Heart left ventricle (tissue), 16 donors: ENCODE measurements at regions of chr4 and their contacts with region 1.

Region 1: GRCh38 chr4:8391972-8392371 is 48.6 kb downstream of the ACOX3 start:
- DNase-seq: peak; percentile 69 to 77 (median 75)
- ATAC-seq: peak in 3 of 4 donors; percentile 31 to 45 (median 42)
- H3K4me3 ChIP-seq: no peak overlapping the region
- H3K27ac ChIP-seq: peak overlapping the region in 7 of 12 donors; percentile 14 to 94 (median 75)
- H3K4me1 ChIP-seq: peaks cover 0 to 42% (median 30%) of the 10 kb centered on the region in 12 donors
- H3K27me3 ChIP-seq: no peaks in the 10 kb centered on the region
- CTCF ChIP-seq: peak in 1 of 12 donors; percentile 31
- POLR2A ChIP-seq: no peak

Region 2: GRCh38 chr4:8330821-8331574 is 61.0 kb before region 1 on chr4:
- intact Hi-C with region 1: loop called in 2 of 10 experiments (anchors 5 to 10 kb)
- DNase-seq: peak; percentile 47 to 88 (median 86)
- ATAC-seq: peak; percentile 94 to 97 (median 96)
- H3K4me3 ChIP-seq: no peak overlapping the region
- H3K27ac ChIP-seq: peak overlapping the region in 11 of 12 donors; percentile 1 to 85 (median 60)
- H3K4me1 ChIP-seq: peaks cover 2 to 21% (median 15%) of the 10 kb centered on the region in 12 donors
- H3K27me3 ChIP-seq: no peaks in the 10 kb centered on the region
- CTCF ChIP-seq: peak in 8 of 12 donors; percentile 17 to 38 (median 22)
- POLR2A ChIP-seq: no peak

Region 3: DNA sequence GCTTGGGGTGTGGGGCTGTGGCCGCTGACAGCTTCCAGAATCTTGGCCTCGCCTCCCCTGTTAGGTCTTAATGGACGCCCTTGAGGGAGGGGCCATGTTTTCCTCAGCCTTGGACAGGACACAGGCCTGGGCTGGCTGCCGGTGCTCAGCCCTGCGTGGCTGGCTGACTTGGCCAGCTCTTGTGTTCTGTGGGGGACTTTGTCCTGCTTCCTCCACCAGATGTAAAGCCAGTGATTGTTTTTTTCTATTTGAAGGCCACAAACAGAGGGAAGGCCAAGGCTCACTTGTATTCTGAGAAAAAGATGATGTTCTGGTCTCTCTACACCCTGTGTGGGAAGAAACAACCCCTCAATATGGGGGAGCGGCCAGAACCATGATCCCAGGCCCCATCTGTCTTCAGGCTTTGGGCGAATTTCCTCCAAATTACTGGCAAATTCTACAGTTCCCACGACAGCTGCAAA is 51.2 kb before region 1 on chr4:
- intact Hi-C with region 1: loop called in 4 of 10 experiments (anchors 2 to 10 kb)
- DNase-seq: peak; percentile 85 to 93 (median 87)
- ATAC-seq: peak; percentile 94 to 96 (median 96)
- H3K4me3 ChIP-seq: no peak overlapping the region
- H3K27ac ChIP-seq: peak overlapping the region; percentile 57 to 96 (median 79)
- H3K4me1 ChIP-seq: peaks cover 6 to 37% (median 21%) of the 10 kb centered on the region in 12 donors
- H3K27me3 ChIP-seq: no peaks in the 10 kb centered on the region
- CTCF ChIP-seq: no peak
- POLR2A ChIP-seq: no peak